Natural killer cell (primary cell): ENCODE measurements at regions of chr1 and their contacts with region 1.

Region 1: GRCh38 chr1:169601093-169601881 is 15.0 kb upstream of the F5 start:
- DNase-seq: peak in 1 of 2 donors; percentile 63
- ATAC-seq: peak in 2 of 3 donors; percentile 28 to 49
- H3K4me3 ChIP-seq: no peak overlapping the region
- H3K4me3 Mint-ChIP-seq: no peak overlapping the region
- H3K27ac ChIP-seq: no peak overlapping the region
- H3K27ac Mint-ChIP-seq: peak overlapping the region; percentile 55 to 77
- H3K4me1 ChIP-seq: peaks cover 24% of the 10 kb centered on the region
- H3K4me1 Mint-ChIP-seq: peaks cover 53 to 55% of the 10 kb centered on the region in 2 donors
- H3K27me3 ChIP-seq: no peaks in the 10 kb centered on the region
- H3K27me3 Mint-ChIP-seq: peaks cover 0 to 12% of the 10 kb centered on the region in 2 donors
- CTCF ChIP-seq: peak; percentile 66

Region 2: GRCh38 chr1:169529068-169529696 is 72.1 kb before region 1 on chr1:
- intact Hi-C with region 1: no loop called
- DNase-seq: no peak
- ATAC-seq: no peak
- H3K4me3 ChIP-seq: no peak overlapping the region
- H3K4me3 Mint-ChIP-seq: no peak overlapping the region
- H3K27ac ChIP-seq: no peak overlapping the region
- H3K27ac Mint-ChIP-seq: no peak overlapping the region
- H3K4me1 ChIP-seq: no peaks in the 10 kb centered on the region
- H3K4me1 Mint-ChIP-seq: peaks cover 6% of the 10 kb centered on the region in 2 donors
- H3K27me3 ChIP-seq: no peaks in the 10 kb centered on the region
- H3K27me3 Mint-ChIP-seq: peaks cover 16 to 31% of the 10 kb centered on the region in 2 donors
- CTCF ChIP-seq: no peak

Region 3: DNA sequence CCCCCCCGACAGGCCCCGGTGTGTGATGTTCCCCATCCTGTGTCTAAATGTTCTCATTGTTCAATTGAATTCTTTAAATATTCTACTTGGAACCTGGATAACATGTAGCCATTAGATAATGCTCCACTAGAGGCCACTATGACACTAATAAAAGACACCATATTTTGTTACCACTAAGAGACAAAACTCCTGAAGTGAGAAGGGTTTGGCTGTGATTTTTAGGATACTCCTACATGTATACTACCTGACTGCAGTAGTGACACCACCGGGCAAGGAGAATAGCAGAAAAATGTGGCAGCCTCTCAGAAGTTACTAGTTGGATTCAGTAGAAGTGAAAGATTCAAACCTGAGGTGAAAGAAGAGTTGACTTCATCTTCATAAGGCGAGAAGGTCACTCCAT is 51.0 kb before region 1 on chr1:
- intact Hi-C with region 1: no loop called
- DNase-seq: peak in 1 of 2 donors; percentile 68
- ATAC-seq: peak; percentile 44 to 78 (median 77)
- H3K4me3 ChIP-seq: no peak overlapping the region
- H3K4me3 Mint-ChIP-seq: no peak overlapping the region
- H3K27ac ChIP-seq: no peak overlapping the region
- H3K27ac Mint-ChIP-seq: no peak overlapping the region
- H3K4me1 ChIP-seq: no peaks in the 10 kb centered on the region
- H3K4me1 Mint-ChIP-seq: peaks cover 0 to 5% of the 10 kb centered on the region in 2 donors
- H3K27me3 ChIP-seq: peaks cover 2% of the 10 kb centered on the region
- H3K27me3 Mint-ChIP-seq: peaks cover 3 to 21% of the 10 kb centered on the region in 2 donors
- CTCF ChIP-seq: peak; percentile 59

Region 4: DNA sequence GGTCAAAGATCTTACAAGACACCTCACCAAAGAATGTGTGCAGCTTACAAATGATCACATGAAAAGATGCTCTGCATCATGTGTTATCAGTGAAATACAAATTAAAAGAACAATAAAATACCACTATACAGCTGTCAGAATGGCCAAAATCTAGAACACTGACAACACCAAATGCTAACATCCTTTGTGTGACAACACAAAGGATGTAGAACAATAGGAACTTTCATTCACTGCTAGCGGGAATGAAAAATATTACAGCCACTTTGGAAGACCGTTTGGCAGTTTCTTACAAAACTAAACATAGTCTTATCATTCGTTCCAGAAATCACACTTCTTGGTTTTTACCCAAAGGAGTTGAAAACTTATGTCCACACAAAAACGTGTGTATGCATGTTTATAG is 49.3 kb after region 1 on chr1:
- intact Hi-C with region 1: loop called (anchors 10 kb)
- DNase-seq: no peak
- ATAC-seq: no peak
- H3K4me3 ChIP-seq: no peak overlapping the region
- H3K4me3 Mint-ChIP-seq: no peak overlapping the region
- H3K27ac ChIP-seq: no peak overlapping the region
- H3K27ac Mint-ChIP-seq: no peak overlapping the region
- H3K4me1 ChIP-seq: peaks cover 4% of the 10 kb centered on the region
- H3K4me1 Mint-ChIP-seq: peaks cover 36 to 39% of the 10 kb centered on the region in 2 donors
- H3K27me3 ChIP-seq: no peaks in the 10 kb centered on the region
- H3K27me3 Mint-ChIP-seq: no peaks in the 10 kb centered on the region
- CTCF ChIP-seq: no peak

Region 5: DNA sequence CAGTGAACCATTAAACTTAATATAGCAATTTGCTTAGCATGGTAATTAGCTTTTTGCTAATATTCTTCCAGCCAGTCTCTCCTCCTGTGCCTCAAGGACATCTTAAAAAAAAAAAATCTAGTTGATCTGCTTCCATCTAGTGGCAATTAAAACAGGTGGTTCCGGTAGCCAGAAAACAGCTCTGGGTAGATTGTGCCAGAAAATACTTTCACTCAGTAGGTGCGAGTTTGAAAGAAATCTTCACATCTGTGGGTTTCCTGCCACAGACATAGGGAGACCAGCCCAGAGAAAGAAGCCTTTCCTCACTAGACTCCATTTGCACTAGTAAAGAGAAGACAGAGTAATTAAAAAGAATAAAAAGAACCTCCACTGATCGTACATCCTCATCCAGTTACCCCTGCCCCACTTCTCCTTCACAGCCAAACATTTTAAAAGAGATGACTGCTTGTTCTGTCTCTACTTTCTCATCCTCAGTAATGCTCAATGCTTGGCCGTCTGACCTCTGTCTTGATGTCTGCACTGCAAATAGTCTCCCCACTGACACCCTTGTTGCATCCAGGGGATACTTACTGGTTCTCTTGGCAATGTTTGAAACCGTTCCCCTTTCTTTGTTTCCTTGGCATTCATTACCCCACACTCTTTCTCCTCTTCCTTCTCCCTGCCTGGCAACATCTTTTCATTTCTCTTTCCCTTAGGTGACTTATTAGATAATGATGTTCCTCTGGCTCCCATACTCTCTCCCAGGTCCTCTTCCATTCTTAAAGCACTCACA is 93.2 kb after region 1 on chr1:
- intact Hi-C with region 1: loop called (anchors 1 kb)
- DNase-seq: peak; percentile 28 to 83
- ATAC-seq: peak; percentile 60 to 80 (median 77)
- H3K4me3 ChIP-seq: no peak overlapping the region
- H3K4me3 Mint-ChIP-seq: peak overlapping the region; percentile 59
- H3K27ac ChIP-seq: peak overlapping the region; percentile 74
- H3K27ac Mint-ChIP-seq: peak overlapping the region; percentile 80 to 89
- H3K4me1 ChIP-seq: peaks cover 60% of the 10 kb centered on the region
- H3K4me1 Mint-ChIP-seq: peaks cover 82 to 88% of the 10 kb centered on the region in 2 donors
- H3K27me3 ChIP-seq: no peaks in the 10 kb centered on the region
- H3K27me3 Mint-ChIP-seq: no peaks in the 10 kb centered on the region
- CTCF ChIP-seq: peak; percentile 20

Region 6: GRCh38 chr1:170296642-170297041 is 695.4 kb after region 1 on chr1:
- intact Hi-C with region 1: no loop called
- DNase-seq: no peak
- ATAC-seq: no peak
- H3K4me3 ChIP-seq: no peak overlapping the region
- H3K4me3 Mint-ChIP-seq: no peak overlapping the region
- H3K27ac ChIP-seq: no peak overlapping the region
- H3K27ac Mint-ChIP-seq: no peak overlapping the region
- H3K4me1 ChIP-seq: no peaks in the 10 kb centered on the region
- H3K4me1 Mint-ChIP-seq: no peaks in the 10 kb centered on the region
- H3K27me3 ChIP-seq: peaks cover 4% of the 10 kb centered on the region
- H3K27me3 Mint-ChIP-seq: peaks cover 0 to 4% of the 10 kb centered on the region in 2 donors
- CTCF ChIP-seq: no peak